Adrenal gland (tissue), 19 donors: ENCODE measurements at regions of chr7 and their contacts with region 1.

Region 1: GRCh38 chr7:30714129-30714528 is 31.9 kb upstream of the CRHR2 start:
- DNase-seq: no peak
- H3K4me3 ChIP-seq: no peak overlapping the region
- H3K27ac ChIP-seq: no peak overlapping the region
- H3K4me1 ChIP-seq: no peaks in the 10 kb centered on the region
- H3K27me3 ChIP-seq: no peaks in the 10 kb centered on the region
- CTCF ChIP-seq: no peak
- POLR2A ChIP-seq: no peak

Region 2: DNA sequence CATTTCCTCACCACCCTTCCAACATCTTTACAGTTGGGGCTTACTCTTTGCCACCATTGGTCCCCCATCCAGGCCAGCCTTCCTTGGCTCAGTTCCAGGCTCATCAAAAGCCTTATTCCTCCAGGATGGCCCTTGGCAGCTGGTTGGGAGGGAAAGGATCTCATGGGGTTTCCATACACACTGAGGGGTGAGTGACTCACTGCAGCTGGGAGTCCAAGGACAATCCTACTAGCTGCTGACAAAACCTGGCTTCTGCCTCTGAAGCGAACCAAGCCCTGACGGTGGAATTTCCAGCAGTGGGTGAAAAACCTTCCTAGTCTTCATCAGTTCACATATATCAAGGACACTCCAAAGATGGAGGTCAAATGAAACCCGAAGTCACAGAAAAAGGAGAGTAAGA is 54.8 kb before region 1 on chr7:
- intact Hi-C with region 1: loop called in 1 of 2 experiments (anchors 2 kb)
- DNase-seq: peak; percentile 37 to 76 (median 65)
- H3K4me3 ChIP-seq: no peak overlapping the region
- H3K27ac ChIP-seq: no peak overlapping the region
- H3K4me1 ChIP-seq: no peaks in the 10 kb centered on the region
- H3K27me3 ChIP-seq: no peaks in the 10 kb centered on the region
- CTCF ChIP-seq: no peak
- POLR2A ChIP-seq: no peak